ENCODE measurements at regions of chr18 and their contacts with region 1.

Region 1: GRCh38 chr18:24370120-24370519 is 27.5 kb downstream of the OSBPL1A start:
- DNase-seq: no peak
- H3K4me3 ChIP-seq: no peak overlapping the region
- H3K4me3 Mint-ChIP-seq: no peak overlapping the region
- H3K27ac ChIP-seq: peak overlapping the region in 1 of 2 donors; percentile 26
- H3K27ac Mint-ChIP-seq: peak overlapping the region in 3 of 7 donors; percentile 8 to 56 (median 18)
- H3K4me1 ChIP-seq: no peaks in the 10 kb centered on the region
- H3K4me1 Mint-ChIP-seq: peaks cover 15% of the 10 kb centered on the region
- H3K27me3 ChIP-seq: no peaks in the 10 kb centered on the region
- H3K27me3 Mint-ChIP-seq: no peaks in the 10 kb centered on the region
- CTCF ChIP-seq: no peak

Region 2: GRCh38 chr18:24432618-24433017 is 62.5 kb after region 1 on chr18:
- intact Hi-C with region 1: loop called in 1 of 2 experiments (anchors 10 kb)
- DNase-seq: peak in 1 of 3 donors; percentile 9
- H3K4me3 ChIP-seq: no peak overlapping the region
- H3K4me3 Mint-ChIP-seq: no peak overlapping the region
- H3K27ac ChIP-seq: no peak overlapping the region
- H3K27ac Mint-ChIP-seq: peak overlapping the region in 1 of 7 donors; percentile 7
- H3K4me1 ChIP-seq: peaks cover 2 to 5% of the 10 kb centered on the region in 2 donors
- H3K4me1 Mint-ChIP-seq: peaks cover 14% of the 10 kb centered on the region
- H3K27me3 ChIP-seq: no peaks in the 10 kb centered on the region
- H3K27me3 Mint-ChIP-seq: peaks cover 0 to 2% (median 0%) of the 10 kb centered on the region in 3 donors
- CTCF ChIP-seq: no peak

Region 3: GRCh38 chr18:24683965-24684364 is 313.8 kb after region 1 on chr18:
- intact Hi-C with region 1: no loop called
- DNase-seq: no peak
- H3K4me3 ChIP-seq: no peak overlapping the region
- H3K4me3 Mint-ChIP-seq: no peak overlapping the region
- H3K27ac ChIP-seq: no peak overlapping the region
- H3K27ac Mint-ChIP-seq: no peak overlapping the region
- H3K4me1 ChIP-seq: no peaks in the 10 kb centered on the region
- H3K4me1 Mint-ChIP-seq: no peaks in the 10 kb centered on the region
- H3K27me3 ChIP-seq: no peaks in the 10 kb centered on the region
- H3K27me3 Mint-ChIP-seq: peaks cover 0 to 3% (median 0%) of the 10 kb centered on the region in 3 donors
- CTCF ChIP-seq: no peak